HEK293 (cell line): ENCODE measurements at regions of chr1 and their contacts with region 1.

Region 1: GRCh38 chr1:12019858-12020509 is 686 bp downstream of the MIIP start:
- H3K4me3 ChIP-seq: peak overlapping the region; percentile 78
- H3K27ac ChIP-seq: peak overlapping the region; percentile 19; the same call in 1 of the 2 replicates
- H3K4me1 ChIP-seq: no peaks in the 10 kb centered on the region
- CTCF ChIP-seq: no peak

Region 2: DNA sequence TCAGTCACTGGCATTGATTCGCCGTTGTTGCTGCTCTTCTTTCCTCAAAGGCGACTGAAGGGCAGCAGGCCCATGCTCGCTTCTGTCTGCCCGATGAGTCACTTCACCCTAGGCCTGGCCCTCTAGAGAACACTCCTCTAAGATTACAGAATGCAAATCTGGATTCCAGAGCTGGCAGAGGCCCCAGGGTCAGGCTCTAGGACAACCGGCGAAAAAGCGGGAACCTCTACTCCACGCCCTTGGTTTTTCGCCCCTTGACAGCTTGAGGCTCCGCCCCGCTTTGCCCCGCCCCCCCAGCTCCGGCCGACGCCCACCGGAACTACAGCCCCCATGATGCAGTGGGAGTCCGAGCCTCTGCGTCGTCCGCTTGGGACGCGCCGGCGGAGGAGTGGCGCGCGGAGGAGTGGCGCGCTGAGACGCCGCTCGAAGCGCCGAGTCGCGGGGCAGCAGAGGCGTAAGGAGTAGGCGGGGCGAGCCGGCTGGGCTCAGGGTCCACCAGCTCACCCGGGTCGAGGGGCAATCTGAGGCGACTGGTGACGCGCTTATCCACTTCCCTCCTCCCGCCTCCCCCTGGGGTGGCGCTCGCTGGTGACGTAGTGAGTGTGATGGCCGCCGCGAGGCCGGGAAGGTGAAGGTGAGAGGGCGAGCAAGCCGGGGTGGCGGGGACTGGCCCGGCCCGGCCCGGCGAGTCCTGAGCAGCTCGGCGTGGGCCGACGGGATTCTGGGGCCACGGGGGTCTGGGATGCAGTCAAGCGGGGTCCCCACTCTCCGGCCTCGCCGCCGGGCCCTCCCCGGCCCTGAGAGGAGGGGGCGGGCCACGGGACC is 39.9 kb before region 1 on chr1 and contains the start of gene MFN2:
- CTCF ChIA-PET with region 1: no interaction called
- POLR2A ChIA-PET with region 1: interaction called, 19 read pairs
- H3K4me3 ChIP-seq: peak within 1 kb of the TSS; percentile 97
- H3K27ac ChIP-seq: peak within 1 kb of the TSS; percentile 67
- H3K4me1 ChIP-seq: 0 out of 2 replicates have a peak, but pooled peaks cover 4% of the 10 kb centered on the region
- CTCF ChIP-seq: no peak

Region 3: GRCh38 chr1:12031039-12031980 is 11.3 kb after region 1 on chr1:
- CTCF ChIA-PET with region 1: no interaction called
- POLR2A ChIA-PET with region 1: interaction called, 32 read pairs
- H3K4me3 ChIP-seq: no peak overlapping the region
- H3K27ac ChIP-seq: no peak overlapping the region
- H3K4me1 ChIP-seq: no peaks in the 10 kb centered on the region
- CTCF ChIP-seq: peak; percentile 53; the same call in 1 of the 2 replicates

Region 4: DNA sequence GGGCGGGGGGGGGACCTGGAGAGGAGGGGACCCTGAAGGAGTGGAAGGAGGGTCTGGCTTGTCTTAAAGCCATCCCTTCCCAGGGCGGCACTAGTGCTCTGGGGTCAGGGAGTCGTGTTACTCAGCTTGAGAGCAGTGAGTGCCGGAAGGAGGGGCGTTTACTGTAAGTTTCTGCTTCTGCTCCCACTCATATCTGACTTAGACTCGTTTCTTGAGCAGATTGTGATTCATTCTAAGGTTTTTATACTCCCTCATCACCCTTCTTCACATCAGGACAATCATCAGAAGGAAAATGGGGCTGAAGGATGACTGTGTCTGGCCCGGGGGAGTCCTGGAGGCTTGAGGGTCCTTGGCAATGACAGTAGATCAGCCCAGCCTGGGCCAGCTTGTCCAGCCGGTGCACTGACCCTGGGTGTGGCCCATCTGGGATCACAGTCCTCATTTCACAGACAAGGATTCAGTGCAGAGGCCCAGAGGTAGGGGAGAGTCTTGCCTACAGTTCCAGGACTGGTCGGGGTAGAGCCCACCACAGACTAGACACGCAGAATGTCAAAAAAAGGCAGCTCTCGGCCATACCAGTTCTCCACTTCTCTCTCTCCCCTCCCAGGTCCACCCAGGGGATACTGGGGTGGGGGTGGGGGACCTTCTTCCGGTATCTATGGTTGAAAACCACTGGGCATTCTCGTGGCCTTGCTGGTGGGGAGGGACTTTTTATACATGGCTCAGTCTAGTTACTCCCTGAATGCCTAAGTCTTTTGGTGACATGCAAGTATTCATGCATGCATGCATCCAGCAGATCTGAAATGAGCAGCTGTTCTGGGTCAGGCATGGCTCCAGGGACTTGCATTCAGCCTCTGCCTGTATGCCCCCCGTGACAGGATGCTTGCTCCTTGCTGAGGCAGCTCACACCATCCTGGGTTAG is 48.2 kb after region 1 on chr1:
- CTCF ChIA-PET with region 1: no interaction called
- POLR2A ChIA-PET with region 1: no interaction called
- H3K4me3 ChIP-seq: no peak overlapping the region
- H3K27ac ChIP-seq: no peak overlapping the region
- H3K4me1 ChIP-seq: no peaks in the 10 kb centered on the region
- CTCF ChIP-seq: no peak